CD8-positive, alpha-beta T cell (primary cell): ENCODE measurements at regions of chr7 and their contacts with region 1.

Region 1: GRCh38 chr7:10973061-10973944 is at the start of gene PHF14:
- DNase-seq: peak; percentile 89 to 98 (median 94)
- ATAC-seq: peak; percentile 97
- H3K4me3 ChIP-seq: peak within 1 kb of the TSS; percentile 67 to 72
- H3K4me3 Mint-ChIP-seq: peak within 1 kb of the TSS; percentile 95
- H3K27ac ChIP-seq: peak within 1 kb of the TSS; percentile 75
- H3K27ac Mint-ChIP-seq: peak within 1 kb of the TSS; percentile 97
- H3K4me1 ChIP-seq: peaks cover 25% of the 10 kb centered on the region
- H3K4me1 Mint-ChIP-seq: peaks cover 45% of the 10 kb centered on the region
- H3K27me3 ChIP-seq: peaks cover 0 to 2% of the 10 kb centered on the region in 2 experiments
- H3K27me3 Mint-ChIP-seq: peaks cover 14% of the 10 kb centered on the region
- CTCF ChIP-seq: no peak
- total RNA-seq, gene PHF14: 18.0 to 18.3 TPM

Region 2: DNA sequence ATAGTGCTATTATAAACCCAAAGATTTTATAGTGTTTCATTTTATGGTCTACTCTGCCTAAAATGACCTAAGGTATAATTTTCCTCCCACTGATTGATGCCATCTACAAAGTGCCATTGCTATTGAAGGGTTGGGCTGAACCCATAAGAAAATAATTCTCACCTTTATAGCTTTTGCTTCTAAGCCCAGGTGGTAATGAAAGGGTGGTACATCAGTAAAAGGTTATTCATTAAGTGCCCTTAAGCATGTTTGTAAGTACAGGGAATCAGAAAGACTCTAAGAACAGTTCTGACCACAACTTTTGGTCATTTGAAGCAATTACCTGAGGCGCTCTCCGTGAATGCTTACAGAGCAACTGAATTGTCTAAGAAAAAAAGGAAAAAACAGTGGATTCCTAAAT is 1292.6 kb before region 1 on chr7:
- CTCF ChIA-PET with region 1: no interaction called
- POLR2A ChIA-PET with region 1: no interaction called
- intact Hi-C with region 1: no loop called
- DNase-seq: no peak
- ATAC-seq: no peak
- H3K4me3 ChIP-seq: no peak overlapping the region
- H3K4me3 Mint-ChIP-seq: no peak overlapping the region
- H3K27ac ChIP-seq: no peak overlapping the region
- H3K27ac Mint-ChIP-seq: no peak overlapping the region
- H3K4me1 ChIP-seq: no peaks in the 10 kb centered on the region
- H3K4me1 Mint-ChIP-seq: no peaks in the 10 kb centered on the region
- H3K27me3 ChIP-seq: no peaks in the 10 kb centered on the region
- H3K27me3 Mint-ChIP-seq: no peaks in the 10 kb centered on the region
- CTCF ChIP-seq: no peak

Region 3: DNA sequence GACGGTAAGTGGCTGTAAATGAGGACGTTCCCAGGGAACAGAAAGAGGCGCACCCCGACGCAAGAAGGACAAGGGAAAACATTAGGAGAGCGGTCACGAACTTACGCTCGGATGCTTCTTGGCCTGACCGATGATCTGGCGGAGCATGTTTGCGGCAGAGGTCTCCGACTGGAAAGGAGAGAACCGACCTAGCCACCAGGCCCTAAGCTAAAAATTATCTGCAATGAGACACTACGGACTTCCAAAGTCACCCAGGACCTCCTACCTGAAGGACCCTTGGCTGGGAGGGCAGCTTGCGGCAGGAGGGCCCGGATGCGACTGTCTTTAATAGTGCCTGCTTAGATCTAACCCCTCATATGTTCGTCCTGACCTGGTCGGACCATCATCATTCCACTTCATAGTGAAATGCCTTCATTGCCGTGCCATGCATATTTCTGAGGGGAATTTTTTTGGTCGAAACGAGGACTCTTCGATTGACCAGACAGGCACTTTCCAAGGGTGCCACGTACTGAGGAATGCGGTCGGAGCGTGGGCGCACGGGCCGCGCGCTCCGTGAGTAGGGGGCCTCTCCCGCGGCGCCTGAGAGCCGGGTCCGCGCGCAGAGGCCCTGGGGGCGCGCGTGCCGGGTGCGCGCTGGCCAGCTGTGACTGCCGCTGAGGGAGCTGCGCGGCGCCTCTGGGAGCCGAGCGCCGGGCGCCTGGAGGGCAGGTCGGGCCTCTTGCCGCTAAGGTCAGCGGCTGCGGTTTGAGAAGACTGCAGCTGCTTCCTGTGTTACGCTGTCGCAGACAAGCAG is 33.2 kb before region 1 on chr7:
- CTCF ChIA-PET with region 1: no interaction called
- POLR2A ChIA-PET with region 1: interaction called, 40 read pairs
- intact Hi-C with region 1: loop called (anchors 1 kb)
- DNase-seq: peak; percentile 76 to 96 (median 85)
- ATAC-seq: peak; percentile 85
- H3K4me3 ChIP-seq: peak overlapping the region; percentile 91 to 96
- H3K4me3 Mint-ChIP-seq: no peak overlapping the region
- H3K27ac ChIP-seq: peak overlapping the region; percentile 96
- H3K27ac Mint-ChIP-seq: no peak overlapping the region
- H3K4me1 ChIP-seq: peaks cover 24% of the 10 kb centered on the region
- H3K4me1 Mint-ChIP-seq: peaks cover 41% of the 10 kb centered on the region
- H3K27me3 ChIP-seq: no peaks in the 10 kb centered on the region
- H3K27me3 Mint-ChIP-seq: no peaks in the 10 kb centered on the region
- CTCF ChIP-seq: no peak